HepG2 (cell line): ENCODE measurements at regions of chr6 and their contacts with region 1.

Region 1: GRCh38 chr6:53643481-53643965 is 22.0 kb downstream of the KLHL31 start:
- DNase-seq: peak; percentile 63
- ATAC-seq: peak; percentile 97
- H3K4me3 ChIP-seq: no peak overlapping the region; a peak in 1 of 6 replicates
- H3K27ac ChIP-seq: peak overlapping the region; percentile 6
- H3K4me1 ChIP-seq: peaks cover 22% of the 10 kb centered on the region
- H3K27me3 ChIP-seq: no peaks in the 10 kb centered on the region
- CTCF ChIP-seq: no peak
- EP300 ChIP-seq: no peak
- POLR2A ChIP-seq: no peak
- RAD21 ChIP-seq: no peak

Region 2: GRCh38 chr6:53605543-53606235 is 37.8 kb before region 1 on chr6:
- CTCF ChIA-PET with region 1: no interaction called
- POLR2A ChIA-PET with region 1: no interaction called
- in situ Hi-C with region 1: no loop called
- intact Hi-C with region 1: loop called (anchors 5 kb)
- DNase-seq: no peak
- ATAC-seq: 0 out of 3 replicates have a peak, but pooled peaks have one; percentile 32
- H3K4me3 ChIP-seq: no peak overlapping the region
- H3K27ac ChIP-seq: no peak overlapping the region
- H3K4me1 ChIP-seq: peaks cover 24% of the 10 kb centered on the region
- H3K27me3 ChIP-seq: no peaks in the 10 kb centered on the region
- CTCF ChIP-seq: no peak
- EP300 ChIP-seq: no peak
- POLR2A ChIP-seq: no peak
- RAD21 ChIP-seq: no peak

Region 3: GRCh38 chr6:53615633-53616449 is 27.7 kb before region 1 on chr6:
- CTCF ChIA-PET with region 1: no interaction called
- POLR2A ChIA-PET with region 1: interaction called, 14 read pairs
- in situ Hi-C with region 1: no loop called
- intact Hi-C with region 1: no loop called
- DNase-seq: peak; percentile 100
- ATAC-seq: peak; percentile 95
- H3K4me3 ChIP-seq: peak overlapping the region; percentile 35 to 60 (median 44); a peak in 5 of 6 replicates
- H3K27ac ChIP-seq: peak overlapping the region; percentile 97
- H3K4me1 ChIP-seq: peaks cover 53% of the 10 kb centered on the region
- H3K27me3 ChIP-seq: no peaks in the 10 kb centered on the region
- CTCF ChIP-seq: no peak; the same call in 1 of the 2 replicates
- EP300 ChIP-seq: peak; percentile 96 to 97
- POLR2A ChIP-seq: peak; percentile 73 to 91
- RAD21 ChIP-seq: no peak; the same call in 1 of the 2 replicates

Region 4: DNA sequence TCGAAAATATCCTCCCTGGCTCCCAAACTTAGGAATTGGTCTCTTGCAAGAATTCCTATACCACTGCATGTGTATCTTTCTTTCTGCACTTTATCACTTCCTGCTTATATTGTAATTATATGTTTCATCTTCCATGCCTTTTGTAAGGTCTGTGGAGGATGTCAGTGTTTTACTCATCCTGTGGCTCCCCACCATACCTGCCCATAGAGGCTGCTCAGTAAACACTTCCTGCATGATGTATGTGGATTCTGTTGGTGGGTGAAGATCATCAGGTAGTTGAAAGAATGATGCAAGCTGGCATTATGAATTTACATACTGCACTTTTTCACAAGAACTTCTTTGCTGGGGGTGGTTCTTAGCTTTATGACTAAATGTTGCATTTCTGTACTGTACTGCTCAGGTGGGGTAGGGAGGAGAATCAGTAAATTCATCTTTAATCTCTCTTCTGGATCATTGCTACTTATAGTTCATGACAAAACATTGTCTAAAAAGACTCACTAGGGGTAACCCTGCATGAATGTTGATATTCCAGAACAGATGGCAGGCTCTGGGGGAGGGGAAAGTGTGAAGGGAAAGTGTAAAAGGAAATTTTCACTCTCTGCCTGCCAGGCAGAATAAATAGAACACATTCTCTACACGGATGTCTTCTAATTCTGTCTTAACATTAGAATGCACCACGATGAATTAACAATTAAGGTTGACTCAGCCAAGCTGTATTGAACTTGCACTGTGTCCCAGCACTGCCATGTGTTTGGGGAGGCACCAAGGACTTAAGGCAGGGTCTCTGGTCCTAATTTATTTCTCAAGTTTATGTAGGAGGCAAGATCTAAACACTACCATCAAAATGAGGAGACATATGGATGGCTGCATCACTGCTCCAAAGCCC is 58.1 kb after region 1 on chr6:
- CTCF ChIA-PET with region 1: no interaction called
- POLR2A ChIA-PET with region 1: no interaction called
- in situ Hi-C with region 1: no loop called
- intact Hi-C with region 1: no loop called
- DNase-seq: no peak
- ATAC-seq: no peak
- H3K4me3 ChIP-seq: no peak overlapping the region
- H3K27ac ChIP-seq: no peak overlapping the region
- H3K4me1 ChIP-seq: no peaks in the 10 kb centered on the region
- H3K27me3 ChIP-seq: no peaks in the 10 kb centered on the region; a peak in 1 of 5 replicates
- CTCF ChIP-seq: no peak
- EP300 ChIP-seq: no peak
- POLR2A ChIP-seq: no peak
- RAD21 ChIP-seq: no peak